ENCODE measurements at regions of chr1 and their contacts with region 1.

Region 1: DNA sequence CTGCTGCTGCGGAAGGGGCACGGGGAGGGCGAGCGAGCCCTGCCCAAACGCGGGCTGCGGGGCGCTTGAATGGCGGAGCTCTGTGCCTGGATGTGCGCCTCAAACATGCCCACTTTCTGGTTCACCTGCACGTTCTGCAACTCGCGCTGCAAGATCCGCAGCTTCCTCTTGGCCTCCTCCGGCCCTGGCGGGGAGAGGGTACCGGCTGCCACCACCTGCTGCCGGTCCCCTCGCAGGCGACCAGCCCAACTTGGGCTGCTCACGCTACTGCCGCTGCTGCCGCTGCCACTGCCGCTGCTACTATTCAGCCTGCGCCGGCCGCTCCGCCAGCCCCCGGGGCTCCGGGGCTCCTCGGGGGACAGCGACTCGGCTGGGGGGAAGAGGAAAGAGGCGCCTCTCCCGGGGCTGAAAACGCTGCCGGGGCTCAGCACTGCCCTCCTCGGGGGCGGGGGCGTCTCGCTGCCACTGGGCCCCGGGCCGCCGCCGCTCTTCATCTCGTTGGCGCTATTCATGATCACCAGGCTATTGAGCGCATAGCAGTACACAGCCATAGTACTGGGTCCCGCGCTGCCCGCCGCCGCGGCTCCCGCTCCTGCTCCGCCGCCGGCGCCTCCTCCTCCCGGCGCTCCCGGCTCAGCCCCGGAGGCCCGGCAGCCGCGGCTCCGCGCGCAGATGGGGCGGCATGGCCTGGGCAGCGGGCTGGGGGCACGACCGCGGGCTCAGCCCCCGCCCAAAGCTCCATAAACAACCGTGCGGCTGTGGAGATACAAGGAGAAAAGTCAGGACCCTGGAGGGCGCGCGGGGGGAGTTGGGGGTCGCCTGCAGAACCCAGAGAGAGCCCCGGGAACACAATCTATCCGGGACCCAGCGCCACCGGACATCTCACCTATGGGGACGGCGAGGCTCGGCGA is 1.9 kb downstream of the ITPKB start:
- DNase-seq: peak; percentile 81
- ATAC-seq: peak; percentile 46
- H3K4me3 ChIP-seq: peak overlapping the region; percentile 82 to 97 (median 87)
- H3K4me3 Mint-ChIP-seq: peak overlapping the region; percentile 90
- H3K27ac ChIP-seq: peak overlapping the region in 1 of 2 donors; percentile 78
- H3K27ac Mint-ChIP-seq: no peak overlapping the region
- H3K4me1 ChIP-seq: peaks cover 67 to 70% of the 10 kb centered on the region in 2 donors
- H3K4me1 Mint-ChIP-seq: peaks cover 66% of the 10 kb centered on the region
- H3K27me3 ChIP-seq: no peaks in the 10 kb centered on the region
- H3K27me3 Mint-ChIP-seq: no peaks in the 10 kb centered on the region
- CTCF ChIP-seq: peak; percentile 33

Region 2: DNA sequence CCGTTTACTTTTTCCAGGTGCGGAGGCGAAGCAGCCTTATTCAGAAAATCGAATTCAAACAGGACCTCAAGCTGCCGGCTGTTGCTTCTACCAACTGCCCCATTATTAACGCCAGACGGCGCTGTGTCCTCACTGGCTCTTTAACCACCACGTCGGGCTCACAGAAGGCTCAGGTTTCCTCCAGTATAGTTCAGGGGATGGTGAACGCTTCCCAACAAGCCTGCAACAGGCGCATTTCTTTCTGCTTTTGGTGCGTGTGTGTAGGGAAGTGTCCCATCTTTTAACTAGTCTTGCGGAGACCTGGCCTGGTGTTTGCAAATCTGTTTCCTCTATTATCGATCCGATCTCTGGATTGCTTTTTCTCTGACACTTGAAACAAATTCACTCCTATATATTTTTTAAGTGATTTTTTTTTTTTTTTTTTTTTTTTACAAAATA is 189.4 kb before region 1 on chr1:
- CTCF ChIA-PET with region 1: interaction called, 3 read pairs
- POLR2A ChIA-PET with region 1: no interaction called
- intact Hi-C with region 1: loop called (anchors 10 kb)
- DNase-seq: peak; percentile 83
- ATAC-seq: peak; percentile 80
- H3K4me3 ChIP-seq: peak overlapping the region in 3 of 5 experiments; percentile 34 to 51 (median 35)
- H3K4me3 Mint-ChIP-seq: peak overlapping the region; percentile 59
- H3K27ac ChIP-seq: no peak overlapping the region
- H3K27ac Mint-ChIP-seq: no peak overlapping the region
- H3K4me1 ChIP-seq: peaks cover 22 to 24% of the 10 kb centered on the region in 2 donors
- H3K4me1 Mint-ChIP-seq: peaks cover 21% of the 10 kb centered on the region
- H3K27me3 ChIP-seq: peaks cover 0 to 33% (median 4%) of the 10 kb centered on the region in 4 experiments
- H3K27me3 Mint-ChIP-seq: peaks cover 17% of the 10 kb centered on the region
- CTCF ChIP-seq: peak; percentile 88

Region 3: DNA sequence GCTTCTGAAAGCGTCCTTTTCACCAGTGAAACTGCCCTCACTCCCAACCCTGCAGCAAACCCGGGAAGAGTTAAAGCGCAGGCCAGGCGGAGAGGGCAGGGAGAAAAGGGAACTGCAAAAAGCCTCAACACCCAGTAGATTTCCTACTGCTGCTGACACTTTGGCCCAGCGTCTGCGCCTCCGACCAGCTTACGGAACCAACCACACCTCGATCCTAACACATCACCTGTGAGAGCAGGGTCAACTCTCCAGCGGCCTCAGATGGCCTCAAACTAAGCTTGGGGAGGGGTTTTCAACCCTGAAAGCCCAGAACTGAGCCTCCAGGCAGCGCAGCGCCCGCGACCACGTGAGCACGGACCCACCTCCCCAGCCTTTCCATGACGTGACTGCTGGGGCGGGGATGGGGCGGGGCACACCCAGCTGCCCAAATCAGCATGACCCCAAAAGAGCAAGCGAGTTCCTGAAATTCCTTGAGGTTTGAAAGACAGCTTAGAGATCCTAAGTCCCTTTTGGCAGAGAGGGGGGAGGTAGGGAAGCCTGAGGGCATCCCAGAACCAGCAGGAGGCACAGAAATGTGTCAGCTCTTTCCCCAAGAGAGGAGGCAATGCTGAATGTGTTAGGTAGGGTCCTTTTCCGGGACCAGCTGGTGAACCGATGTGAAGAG is 57.2 kb before region 1 on chr1:
- CTCF ChIA-PET with region 1: interaction called, 4 read pairs
- POLR2A ChIA-PET with region 1: interaction called, 15 read pairs
- intact Hi-C with region 1: loop called (anchors 1 kb)
- DNase-seq: peak; percentile 90
- ATAC-seq: peak; percentile 48
- H3K4me3 ChIP-seq: peak overlapping the region; percentile 19 to 63 (median 55)
- H3K4me3 Mint-ChIP-seq: peak overlapping the region; percentile 83
- H3K27ac ChIP-seq: peak overlapping the region; percentile 88 to 94
- H3K27ac Mint-ChIP-seq: peak overlapping the region; percentile 96
- H3K4me1 ChIP-seq: peaks cover 94 to 99% of the 10 kb centered on the region in 2 donors
- H3K4me1 Mint-ChIP-seq: peaks cover 98% of the 10 kb centered on the region
- H3K27me3 ChIP-seq: no peaks in the 10 kb centered on the region
- H3K27me3 Mint-ChIP-seq: no peaks in the 10 kb centered on the region
- CTCF ChIP-seq: no peak

Region 4: DNA sequence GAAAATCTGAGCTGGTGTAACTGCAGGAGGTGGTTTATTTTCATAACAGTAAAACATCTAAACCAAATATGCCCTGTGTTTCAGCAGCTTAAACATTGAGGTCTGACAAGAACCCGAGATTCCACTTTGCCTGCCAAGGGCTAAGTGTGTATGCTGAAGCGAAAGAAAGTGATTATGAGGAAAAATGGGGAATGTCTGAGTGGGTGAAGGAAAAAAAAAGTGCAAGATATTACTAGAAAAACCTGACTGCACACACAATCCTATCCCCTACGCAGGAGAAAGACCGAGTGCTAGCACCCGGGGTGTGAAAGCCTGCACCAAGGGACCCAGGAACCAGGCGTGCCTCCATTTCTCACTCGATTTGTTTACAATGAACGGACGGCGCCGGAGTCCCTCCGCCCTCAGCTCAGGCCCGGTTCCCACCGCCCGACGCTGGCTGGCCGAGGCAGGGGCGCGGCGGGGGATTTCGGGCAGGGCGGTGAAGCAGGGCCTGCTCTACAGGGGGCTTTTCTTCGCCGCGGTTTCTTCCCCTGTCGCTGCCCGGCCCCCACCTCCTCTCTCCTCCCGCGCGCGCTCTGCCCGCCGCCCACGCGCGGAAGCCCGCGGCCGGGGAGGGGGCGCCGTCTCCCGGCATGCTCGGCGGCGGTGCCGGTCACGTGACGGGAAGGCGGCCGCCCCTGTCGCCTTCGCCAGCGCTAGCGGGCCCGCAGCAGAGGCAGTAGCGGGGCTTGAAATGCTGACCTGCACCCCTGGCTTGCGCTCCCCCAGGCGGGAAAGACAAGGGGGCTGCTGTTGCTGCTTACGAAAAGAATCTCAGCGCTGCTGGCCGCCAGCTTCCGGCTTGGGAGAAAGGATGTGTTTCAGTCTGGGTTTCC is 34.0 kb before region 1 on chr1:
- CTCF ChIA-PET with region 1: interaction called, 5 read pairs
- POLR2A ChIA-PET with region 1: interaction called, 9 read pairs
- intact Hi-C with region 1: loop called (anchors 2 kb)
- DNase-seq: peak; percentile 94
- ATAC-seq: peak; percentile 85
- H3K4me3 ChIP-seq: peak overlapping the region; percentile 63 to 80 (median 75)
- H3K4me3 Mint-ChIP-seq: peak overlapping the region; percentile 90
- H3K27ac ChIP-seq: peak overlapping the region; percentile 96 to 99
- H3K27ac Mint-ChIP-seq: peak overlapping the region; percentile 93
- H3K4me1 ChIP-seq: peaks cover 46 to 49% of the 10 kb centered on the region in 2 donors
- H3K4me1 Mint-ChIP-seq: peaks cover 55% of the 10 kb centered on the region
- H3K27me3 ChIP-seq: no peaks in the 10 kb centered on the region
- H3K27me3 Mint-ChIP-seq: no peaks in the 10 kb centered on the region
- CTCF ChIP-seq: no peak

Region 5: DNA sequence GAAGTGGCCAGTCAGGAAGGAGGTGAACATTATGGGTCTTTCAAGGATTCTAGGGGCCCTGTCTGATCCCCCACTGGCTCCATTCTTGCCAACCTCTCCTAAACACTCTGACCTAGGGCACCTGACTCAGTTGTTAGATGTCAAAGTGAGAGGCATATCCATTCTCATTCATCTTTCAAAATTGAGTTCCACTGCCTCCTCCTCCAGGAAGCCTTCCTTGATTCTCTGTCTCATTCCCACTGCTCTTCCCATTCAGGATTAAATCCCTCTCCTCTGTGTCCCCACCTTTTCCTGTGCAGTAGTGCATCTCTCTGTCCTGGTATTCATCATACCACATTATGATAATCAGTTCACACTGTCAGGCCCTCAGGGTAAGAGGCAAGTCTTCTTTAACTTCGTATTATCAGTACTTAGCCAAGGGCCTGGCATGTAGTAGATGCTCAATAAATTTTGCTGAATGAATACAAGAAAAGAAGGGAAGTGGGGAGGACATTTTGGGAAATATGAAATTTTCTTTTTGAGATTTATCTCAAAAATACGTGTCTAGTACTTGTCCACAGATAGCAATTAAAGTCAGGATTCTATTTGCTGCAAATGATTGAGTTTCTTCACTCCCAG is 63.7 kb after region 1 on chr1:
- CTCF ChIA-PET with region 1: no interaction called
- POLR2A ChIA-PET with region 1: interaction called, 10 read pairs
- intact Hi-C with region 1: no loop called
- DNase-seq: no peak
- ATAC-seq: no peak
- H3K4me3 ChIP-seq: no peak overlapping the region
- H3K4me3 Mint-ChIP-seq: no peak overlapping the region
- H3K27ac ChIP-seq: no peak overlapping the region
- H3K27ac Mint-ChIP-seq: no peak overlapping the region
- H3K4me1 ChIP-seq: peaks cover 6 to 15% of the 10 kb centered on the region in 2 donors
- H3K4me1 Mint-ChIP-seq: peaks cover 15% of the 10 kb centered on the region
- H3K27me3 ChIP-seq: no peaks in the 10 kb centered on the region
- H3K27me3 Mint-ChIP-seq: no peaks in the 10 kb centered on the region
- CTCF ChIP-seq: no peak

Region 6: DNA sequence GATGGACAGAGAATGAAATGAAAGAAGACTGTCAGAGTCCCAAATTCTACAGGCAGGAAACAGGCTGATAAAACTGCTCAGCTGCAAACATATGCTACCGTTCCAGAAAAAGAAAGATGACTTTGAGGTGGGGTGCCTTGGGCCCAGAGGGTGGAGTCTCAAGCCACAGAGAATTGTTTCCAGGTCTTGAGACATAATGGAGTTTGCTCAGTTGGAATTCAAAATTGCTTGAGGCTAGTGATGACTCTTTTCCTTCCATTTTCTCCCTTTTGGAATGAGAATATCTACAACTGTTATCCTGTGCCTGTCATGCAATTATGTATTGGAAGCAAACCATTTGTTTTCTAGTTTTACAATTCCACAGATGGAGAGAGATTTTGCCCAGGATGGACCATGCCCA is 109.6 kb after region 1 on chr1:
- CTCF ChIA-PET with region 1: no interaction called
- POLR2A ChIA-PET with region 1: interaction called, 12 read pairs
- intact Hi-C with region 1: no loop called
- DNase-seq: no peak
- ATAC-seq: no peak
- H3K4me3 ChIP-seq: no peak overlapping the region
- H3K4me3 Mint-ChIP-seq: no peak overlapping the region
- H3K27ac ChIP-seq: no peak overlapping the region
- H3K27ac Mint-ChIP-seq: no peak overlapping the region
- H3K4me1 ChIP-seq: no peaks in the 10 kb centered on the region
- H3K4me1 Mint-ChIP-seq: peaks cover 3% of the 10 kb centered on the region
- H3K27me3 ChIP-seq: no peaks in the 10 kb centered on the region
- H3K27me3 Mint-ChIP-seq: no peaks in the 10 kb centered on the region
- CTCF ChIP-seq: no peak

Region 7: GRCh38 chr1:226882631-226883409 is 145.7 kb after region 1 on chr1:
- CTCF ChIA-PET with region 1: no interaction called
- POLR2A ChIA-PET with region 1: no interaction called
- intact Hi-C with region 1: no loop called
- DNase-seq: peak; percentile 74
- ATAC-seq: peak; percentile 92
- H3K4me3 ChIP-seq: peak overlapping the region in 4 of 5 experiments; percentile 16 to 58 (median 31)
- H3K4me3 Mint-ChIP-seq: peak overlapping the region; percentile 71
- H3K27ac ChIP-seq: peak overlapping the region; percentile 62 to 81
- H3K27ac Mint-ChIP-seq: peak overlapping the region; percentile 84
- H3K4me1 ChIP-seq: peaks cover 44 to 52% of the 10 kb centered on the region in 2 donors
- H3K4me1 Mint-ChIP-seq: peaks cover 46% of the 10 kb centered on the region
- H3K27me3 ChIP-seq: no peaks in the 10 kb centered on the region
- H3K27me3 Mint-ChIP-seq: no peaks in the 10 kb centered on the region
- CTCF ChIP-seq: no peak

Region 8: DNA sequence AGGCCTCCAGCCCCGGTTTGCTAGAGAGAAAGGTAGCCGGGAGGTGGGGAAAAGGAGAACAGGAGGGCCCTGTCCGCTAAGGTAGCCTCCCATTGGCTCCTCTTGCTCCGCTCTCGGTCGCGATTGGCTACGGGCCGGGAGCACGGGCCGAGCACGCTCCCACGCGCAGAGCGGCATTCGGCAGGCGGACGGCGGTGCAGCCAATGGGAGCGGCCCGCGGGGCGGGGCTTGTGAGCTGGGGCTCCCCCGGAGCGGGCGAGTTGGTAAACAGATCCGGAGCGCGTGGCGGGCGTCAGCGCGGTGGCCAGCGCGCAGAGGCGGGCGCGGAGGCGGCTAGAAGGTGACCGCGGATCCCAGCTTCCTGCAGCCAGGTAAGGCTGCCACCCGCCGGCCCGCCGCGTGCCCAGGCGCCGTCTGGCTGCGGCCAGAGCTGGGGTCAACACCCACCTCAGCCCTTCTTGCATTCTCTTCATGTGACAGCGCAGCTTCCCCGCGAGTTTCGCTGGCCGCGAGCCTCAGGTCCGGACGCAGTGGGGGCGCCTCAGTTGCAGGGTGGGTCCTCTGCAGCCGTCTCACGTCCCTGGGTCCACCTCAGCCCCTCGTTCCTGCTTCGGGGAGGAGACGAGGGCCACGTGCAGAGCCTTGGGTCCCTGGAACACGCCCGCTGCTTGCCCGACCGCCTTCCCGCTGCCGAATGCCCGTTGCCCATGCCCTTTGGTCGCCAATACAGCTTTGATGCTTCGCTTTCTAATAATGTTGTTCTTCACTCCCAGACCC is 203.1 kb after region 1 on chr1 and contains the start of gene COQ8A:
- CTCF ChIA-PET with region 1: no interaction called
- POLR2A ChIA-PET with region 1: no interaction called
- intact Hi-C with region 1: loop called (anchors 1 kb)
- DNase-seq: peak; percentile 99
- ATAC-seq: peak; percentile 92
- H3K4me3 ChIP-seq: peak within 1 kb of the TSS; percentile 78 to 93 (median 90)
- H3K4me3 Mint-ChIP-seq: peak within 1 kb of the TSS; percentile 95
- H3K27ac ChIP-seq: peak within 1 kb of the TSS; percentile 86 to 94
- H3K27ac Mint-ChIP-seq: peak within 1 kb of the TSS; percentile 99
- H3K4me1 ChIP-seq: peaks cover 27 to 35% of the 10 kb centered on the region in 2 donors
- H3K4me1 Mint-ChIP-seq: peaks cover 60% of the 10 kb centered on the region
- H3K27me3 ChIP-seq: no peaks in the 10 kb centered on the region
- H3K27me3 Mint-ChIP-seq: no peaks in the 10 kb centered on the region
- CTCF ChIP-seq: no peak
- total RNA-seq, gene COQ8A: 48.7 and 58.2 TPM in 2 replicates